Upper lobe of right lung (tissue), 1 donor: ENCODE measurements at regions of chr4 and their contacts with region 1.

Region 1: GRCh38 chr4:165537028-165537648 is 158.3 kb downstream of the CPE start:
- DNase-seq: no peak
- ATAC-seq: peak; percentile 72
- H3K4me3 ChIP-seq: no peak overlapping the region
- H3K27ac ChIP-seq: no peak overlapping the region
- H3K4me1 ChIP-seq: no peaks in the 10 kb centered on the region
- H3K27me3 ChIP-seq: no peaks in the 10 kb centered on the region
- CTCF ChIP-seq: peak; percentile 76

Region 2: DNA sequence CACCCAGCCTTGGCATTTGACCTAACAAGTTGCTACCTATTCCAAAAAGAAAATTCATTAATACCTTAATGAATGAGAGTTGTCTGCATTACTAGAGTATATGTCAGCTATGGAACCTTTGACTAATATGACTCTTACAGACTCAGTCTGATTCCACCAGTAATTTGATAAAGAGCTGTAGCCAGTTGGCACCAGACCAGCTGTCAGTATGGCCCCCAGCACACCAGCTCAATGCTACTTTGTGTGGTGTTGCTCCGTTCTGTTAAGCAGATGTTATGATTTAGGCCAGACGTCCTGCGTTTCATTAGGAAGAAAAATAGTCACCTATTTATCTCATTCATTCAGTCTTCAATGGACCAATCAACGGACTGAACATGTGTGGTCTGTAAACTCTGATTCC is 551.4 kb after region 1 on chr4:
- intact Hi-C with region 1: loop called (anchors 5 kb)
- DNase-seq: no peak
- ATAC-seq: no peak
- H3K4me3 ChIP-seq: no peak overlapping the region
- H3K27ac ChIP-seq: no peak overlapping the region
- H3K4me1 ChIP-seq: no peaks in the 10 kb centered on the region
- H3K27me3 ChIP-seq: no peaks in the 10 kb centered on the region
- CTCF ChIP-seq: no peak

Region 3: GRCh38 chr4:166104617-166105016 is 567.5 kb after region 1 on chr4:
- intact Hi-C with region 1: loop called (anchors 5 kb)
- DNase-seq: no peak
- ATAC-seq: no peak
- H3K4me3 ChIP-seq: no peak overlapping the region
- H3K27ac ChIP-seq: no peak overlapping the region
- H3K4me1 ChIP-seq: no peaks in the 10 kb centered on the region
- H3K27me3 ChIP-seq: no peaks in the 10 kb centered on the region
- CTCF ChIP-seq: no peak